ENCODE measurements at regions of chr4 and their contacts with region 1.

Region 1: DNA sequence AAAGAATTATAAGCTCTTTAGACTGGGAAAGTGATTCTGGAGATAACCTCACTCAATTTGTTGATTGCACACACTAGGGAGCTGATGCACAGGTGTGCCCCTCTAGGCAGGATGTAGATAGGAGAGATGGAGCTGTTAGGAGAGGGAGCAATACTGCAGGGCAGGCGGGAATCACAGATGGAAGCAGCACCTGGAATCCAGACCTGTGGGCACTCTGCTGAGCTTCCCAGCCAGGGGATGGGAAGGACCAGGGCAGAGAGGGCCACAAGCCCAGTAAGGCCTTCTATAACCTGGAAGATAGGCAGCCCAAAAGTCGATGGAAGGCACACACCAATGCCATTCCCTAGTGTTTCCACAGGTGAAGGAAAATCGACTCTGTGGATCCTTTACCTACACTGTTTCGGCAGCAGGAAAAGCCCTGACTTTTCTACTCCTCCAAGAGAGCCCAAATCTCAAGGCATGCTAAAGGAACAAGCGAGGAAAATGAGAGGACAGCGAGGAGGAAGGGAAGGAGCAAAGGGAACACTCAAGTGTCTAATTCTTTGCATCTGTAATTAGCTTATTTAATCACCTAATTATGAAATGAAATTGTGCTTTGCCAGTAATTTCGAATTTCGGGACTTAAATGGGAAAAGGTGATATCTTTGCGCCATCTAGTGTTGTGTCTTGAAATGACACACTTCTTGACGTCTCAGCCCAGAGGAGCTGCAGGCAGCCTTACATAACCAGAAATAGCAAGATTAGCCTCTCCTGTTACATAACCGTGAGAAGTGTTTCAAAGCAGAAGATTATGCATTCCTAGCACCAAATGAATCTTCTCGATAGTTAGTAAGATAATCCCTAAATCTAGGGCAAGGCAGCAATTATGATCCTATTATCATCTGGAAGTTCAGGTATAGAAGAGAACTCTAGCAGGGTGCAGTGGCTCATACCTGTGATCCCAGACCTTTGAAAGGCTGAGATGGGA is 31.0 kb upstream of the TLR3 start:
- DNase-seq: peak; percentile 67
- H3K4me3 ChIP-seq: no peak overlapping the region
- H3K27ac ChIP-seq: no peak overlapping the region
- H3K4me1 ChIP-seq: peaks cover under 1% of the 10 kb centered on the region
- H3K27me3 ChIP-seq: no peaks in the 10 kb centered on the region
- CTCF ChIP-seq: peak; percentile 74 to 88 (median 82)
- POLR2A ChIP-seq: no peak

Region 2: GRCh38 chr4:185203486-185204237 is 834.3 kb before region 1 on chr4 and contains the start of gene CFAP97:
- intact Hi-C with region 1: loop called (anchors 10 kb)
- DNase-seq: peak; percentile 88
- H3K4me3 ChIP-seq: peak within 1 kb of the TSS; percentile 60 to 93
- H3K27ac ChIP-seq: peak within 1 kb of the TSS; percentile 94 to 98
- H3K4me1 ChIP-seq: peaks cover 3% of the 10 kb centered on the region
- H3K27me3 ChIP-seq: no peaks in the 10 kb centered on the region
- CTCF ChIP-seq: peak in 1 of 4 experiments; percentile 13
- POLR2A ChIP-seq: peak; percentile 71
- total RNA-seq, gene CFAP97: 28.9 to 35.2 TPM

Region 3: DNA sequence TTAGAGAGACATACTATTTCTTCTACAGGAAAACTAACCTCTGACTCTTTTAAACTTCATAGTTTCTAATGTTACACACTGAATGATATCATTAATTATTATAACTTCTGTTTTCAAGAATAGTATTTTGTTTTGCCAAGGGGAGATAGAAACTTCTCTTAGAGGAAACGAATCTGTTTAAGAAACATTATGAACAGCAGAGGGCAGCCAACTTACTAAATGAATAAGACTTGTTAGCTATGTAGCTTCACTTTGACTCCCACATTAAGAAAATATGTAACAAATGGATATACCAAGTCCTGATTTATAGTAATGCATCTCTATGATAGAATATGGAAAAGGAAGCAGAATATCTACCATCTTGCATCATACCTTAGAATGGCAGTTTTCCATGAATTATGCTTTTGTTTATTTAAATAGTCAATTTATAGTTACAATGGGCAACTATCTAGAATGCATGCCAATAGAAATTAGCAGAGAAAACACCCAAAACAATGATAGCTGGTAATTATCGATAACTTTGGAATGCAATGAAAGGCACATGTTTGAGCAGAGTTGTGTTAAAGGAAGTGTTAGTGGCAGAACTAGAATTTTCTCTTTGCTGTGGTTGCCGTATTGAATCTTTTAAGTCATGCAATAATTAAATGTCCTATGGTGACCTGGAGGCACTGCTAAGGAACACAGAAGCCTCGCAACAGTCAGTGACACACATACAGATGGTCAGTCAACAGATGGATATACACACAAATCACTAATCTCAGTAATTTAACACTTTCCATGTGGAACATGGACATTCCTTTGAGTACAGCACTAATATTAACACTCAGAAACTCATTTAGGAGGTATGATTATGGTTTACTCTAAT is 396.9 kb before region 1 on chr4:
- intact Hi-C with region 1: loop called (anchors 5 kb)
- DNase-seq: peak; percentile 55
- H3K4me3 ChIP-seq: no peak overlapping the region
- H3K27ac ChIP-seq: no peak overlapping the region
- H3K4me1 ChIP-seq: peaks cover 2% of the 10 kb centered on the region
- H3K27me3 ChIP-seq: no peaks in the 10 kb centered on the region
- CTCF ChIP-seq: peak in 3 of 4 experiments; percentile 42 to 72 (median 62)
- POLR2A ChIP-seq: no peak

Region 4: GRCh38 chr4:185774845-185775680 is 262.9 kb before region 1 on chr4:
- intact Hi-C with region 1: loop called (anchors 10 kb)
- DNase-seq: no peak
- H3K4me3 ChIP-seq: no peak overlapping the region
- H3K27ac ChIP-seq: peak overlapping the region; percentile 40 to 41
- H3K4me1 ChIP-seq: no peaks in the 10 kb centered on the region
- H3K27me3 ChIP-seq: no peaks in the 10 kb centered on the region
- CTCF ChIP-seq: no peak
- POLR2A ChIP-seq: no peak

Region 5: GRCh38 chr4:186283311-186283710 is 245.3 kb after region 1 on chr4:
- intact Hi-C with region 1: no loop called
- DNase-seq: no peak
- H3K4me3 ChIP-seq: no peak overlapping the region
- H3K27ac ChIP-seq: no peak overlapping the region
- H3K4me1 ChIP-seq: no peaks in the 10 kb centered on the region
- H3K27me3 ChIP-seq: no peaks in the 10 kb centered on the region
- CTCF ChIP-seq: no peak
- POLR2A ChIP-seq: no peak

Measured in prostate gland (tissue), 2 donors.